MCF 10A (cell line): ENCODE measurements at regions of chr6 and their contacts with region 1.

Region 1: DNA sequence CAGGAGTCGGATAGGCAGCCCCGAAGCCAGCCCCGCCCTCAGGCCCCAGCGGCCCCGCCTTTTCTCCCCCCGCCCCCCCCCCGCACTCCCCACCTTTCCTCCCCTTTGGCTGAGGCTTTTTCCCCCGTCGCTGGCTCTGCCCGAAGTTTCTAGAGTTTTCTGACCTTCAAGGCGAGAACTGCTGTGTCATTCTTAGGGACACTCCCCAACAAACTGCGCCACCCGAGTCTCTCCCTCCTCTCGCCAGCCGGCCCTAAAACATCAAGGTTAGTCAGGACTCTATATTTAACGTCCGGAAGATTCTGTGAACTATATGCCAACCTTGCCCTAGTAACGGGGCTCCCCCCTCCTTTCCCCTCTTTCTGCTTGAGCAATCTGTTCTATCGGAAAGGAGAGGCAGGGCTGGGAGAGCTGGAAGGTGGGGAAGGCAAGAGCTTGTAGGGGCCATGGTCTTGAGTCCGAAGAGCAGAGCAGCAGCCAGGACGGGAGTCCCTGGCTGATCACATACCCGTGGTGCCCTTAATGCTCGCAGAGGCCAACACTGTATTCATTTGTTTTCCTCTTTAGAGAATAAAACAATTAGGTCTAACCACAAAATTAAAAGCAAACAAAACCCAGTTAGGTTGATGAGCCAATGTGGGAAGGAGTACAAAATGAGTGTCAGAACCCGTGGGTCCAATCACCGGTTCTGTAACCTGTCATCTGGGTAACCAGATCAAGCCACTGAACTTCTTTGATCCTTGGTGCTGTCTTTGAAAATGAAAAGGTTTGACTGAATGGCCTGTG is 5.3 kb upstream of the HSPA1B start:
- DNase-seq: peak; percentile 94
- H3K4me3 Mint-ChIP-seq: peak overlapping the region; percentile 91
- H3K27ac Mint-ChIP-seq: peak overlapping the region; percentile 99
- H3K4me1 Mint-ChIP-seq: peaks cover 29% of the 10 kb centered on the region
- H3K27me3 Mint-ChIP-seq: no peaks in the 10 kb centered on the region
- CTCF ChIP-seq: no peak

Region 2: DNA sequence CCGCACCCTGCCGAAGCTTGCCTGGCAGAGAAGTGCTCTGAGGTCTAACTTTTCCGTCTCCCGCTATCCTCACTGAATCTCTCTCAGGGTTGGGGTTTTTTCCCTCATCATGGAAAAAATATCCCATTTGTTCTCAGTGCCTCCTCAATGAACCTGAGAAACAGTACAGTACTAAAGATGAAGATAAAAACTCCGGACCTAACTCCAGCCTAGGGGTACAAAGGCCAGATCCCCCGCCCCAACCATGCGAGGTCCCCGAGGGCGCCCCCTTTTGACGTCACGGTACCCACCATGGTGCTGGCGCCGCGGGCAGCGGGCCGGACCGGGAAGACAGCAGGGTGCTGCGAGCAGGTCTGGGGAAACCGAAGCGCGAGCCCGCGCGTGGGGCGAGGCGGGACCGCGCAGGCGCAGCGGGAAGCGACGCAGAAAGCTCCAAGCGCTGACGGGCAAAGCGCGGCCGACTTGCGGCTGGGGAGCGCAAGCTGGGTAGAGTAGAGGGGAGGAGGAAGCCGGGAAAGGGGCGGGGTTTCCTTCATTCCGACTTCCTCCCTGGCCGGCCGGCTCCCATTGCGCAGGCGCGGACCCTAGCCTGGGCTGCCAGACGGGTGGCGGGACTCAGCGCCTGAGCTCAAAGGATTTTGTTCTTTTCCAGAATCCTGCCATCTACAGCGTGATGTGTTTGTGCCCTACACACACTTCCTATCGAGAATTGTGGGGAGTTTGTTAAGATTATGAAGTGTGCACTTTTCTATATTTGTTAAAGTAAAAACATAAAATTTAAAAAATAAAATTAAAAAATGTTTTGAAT is 15.6 kb before region 1 on chr6 and contains the start of gene LSM2:
- CTCF ChIA-PET with region 1: interaction called, 5 read pairs
- POLR2A ChIA-PET with region 1: interaction called, 192 read pairs
- intact Hi-C with region 1: no loop called
- DNase-seq: peak; percentile 98
- H3K4me3 Mint-ChIP-seq: peak within 1 kb of the TSS; percentile 82
- H3K27ac Mint-ChIP-seq: peak within 1 kb of the TSS; percentile 84
- H3K4me1 Mint-ChIP-seq: peaks cover 6% of the 10 kb centered on the region
- H3K27me3 Mint-ChIP-seq: no peaks in the 10 kb centered on the region
- CTCF ChIP-seq: peak; percentile 27
- total RNA-seq, gene LSM2: 36.9 and 47.4 TPM in 2 replicates